Panc1 (cell line): ENCODE measurements at regions of chr2 and their contacts with region 1.

Region 1: DNA sequence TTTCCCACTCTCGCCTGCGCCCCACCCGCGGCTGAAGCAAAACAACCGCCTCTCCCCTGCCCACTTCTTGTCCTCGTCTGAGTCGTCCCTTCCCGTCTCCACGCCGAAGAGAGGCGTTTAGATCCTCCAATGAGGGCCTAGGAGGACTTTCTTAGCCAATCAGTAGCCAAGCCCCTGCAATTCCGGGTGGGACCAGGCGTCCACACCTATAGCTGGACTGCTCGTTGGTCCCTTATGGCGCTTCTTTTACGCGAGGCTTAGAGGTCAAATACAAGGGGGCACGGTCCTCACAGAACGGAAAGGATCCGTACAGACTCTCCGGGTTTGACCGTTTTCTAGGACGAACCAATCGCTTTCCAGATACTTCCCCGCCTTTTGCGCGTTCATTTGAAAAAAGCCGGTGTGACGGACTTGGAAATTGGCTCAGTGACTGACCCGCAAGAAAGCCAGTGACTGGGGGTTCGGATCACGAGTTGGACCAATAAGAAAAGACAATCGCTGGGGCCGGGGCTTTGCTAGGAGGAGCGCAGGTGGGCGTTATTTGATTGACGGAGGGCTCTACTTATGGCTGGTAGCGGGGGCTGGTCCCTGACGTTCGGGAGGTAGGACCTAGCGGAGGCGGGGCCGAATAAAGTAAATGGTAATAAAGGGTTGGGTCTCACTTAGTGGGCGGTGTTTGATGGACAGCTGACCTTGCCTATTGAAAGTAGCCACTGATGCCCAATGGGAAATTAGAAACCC is 565 bp upstream of the PPM1B start:
- DNase-seq: peak; percentile 99
- ATAC-seq: peak; percentile 92
- H3K4me3 ChIP-seq: peak overlapping the region; percentile 70 to 94
- H3K27ac ChIP-seq: peak overlapping the region; percentile 96
- H3K4me1 ChIP-seq: no peaks in the 10 kb centered on the region
- H3K27me3 ChIP-seq: no peaks in the 10 kb centered on the region
- CTCF ChIP-seq: no peak

Region 2: DNA sequence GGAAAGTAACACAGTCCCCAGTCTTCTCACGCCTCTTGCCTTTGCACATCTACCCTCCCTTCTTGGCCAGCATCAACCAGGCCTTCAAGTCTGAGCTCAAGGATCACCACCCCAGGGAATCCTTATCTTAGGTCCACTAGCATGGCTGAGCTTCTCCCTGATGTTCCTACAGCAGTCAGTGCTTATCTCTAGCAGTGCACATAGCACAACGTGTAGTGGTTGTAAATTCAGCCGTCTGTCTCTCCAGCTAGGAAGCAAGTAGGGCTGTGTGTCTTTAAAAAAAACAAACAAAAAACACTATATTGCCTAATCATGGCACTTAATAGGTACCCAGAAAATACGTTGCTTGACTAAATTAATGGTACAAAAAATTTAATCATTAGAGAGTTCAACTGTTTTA is 1703.5 kb before region 1 on chr2:
- CTCF ChIA-PET with region 1: no interaction called
- POLR2A ChIA-PET with region 1: interaction called, 14 read pairs
- in situ Hi-C with region 1: no loop called
- intact Hi-C with region 1: no loop called
- DNase-seq: no peak
- ATAC-seq: no peak
- H3K4me3 ChIP-seq: no peak overlapping the region
- H3K27ac ChIP-seq: no peak overlapping the region
- H3K4me1 ChIP-seq: no peaks in the 10 kb centered on the region
- H3K27me3 ChIP-seq: no peaks in the 10 kb centered on the region
- CTCF ChIP-seq: no peak

Region 3: DNA sequence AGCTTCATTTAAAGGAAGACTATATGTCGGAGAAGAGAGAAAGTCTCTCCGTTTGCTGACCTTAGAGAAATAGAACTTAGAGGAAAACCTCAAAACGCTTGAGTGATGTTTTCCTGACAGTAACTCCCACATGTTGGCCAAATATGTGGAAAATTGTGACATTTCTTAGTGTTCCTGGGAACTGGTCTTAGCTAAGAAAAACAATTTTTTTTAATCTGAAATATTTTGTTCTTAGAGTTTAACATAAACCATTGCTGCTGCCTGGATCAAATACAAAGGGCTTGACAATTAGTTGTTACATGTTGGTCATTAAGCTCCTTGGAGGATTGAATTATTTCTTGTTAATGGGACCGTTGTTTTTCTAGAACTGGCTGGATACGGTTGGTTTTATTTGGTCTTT is 378.0 kb before region 1 on chr2:
- CTCF ChIA-PET with region 1: no interaction called
- POLR2A ChIA-PET with region 1: no interaction called
- in situ Hi-C with region 1: no loop called
- intact Hi-C with region 1: no loop called
- DNase-seq: no peak
- ATAC-seq: no peak
- H3K4me3 ChIP-seq: no peak overlapping the region
- H3K27ac ChIP-seq: no peak overlapping the region
- H3K4me1 ChIP-seq: no peaks in the 10 kb centered on the region
- H3K27me3 ChIP-seq: no peaks in the 10 kb centered on the region
- CTCF ChIP-seq: no peak

Region 4: GRCh38 chr2:44087036-44087713 is 80.9 kb before region 1 on chr2:
- CTCF ChIA-PET with region 1: no interaction called
- POLR2A ChIA-PET with region 1: no interaction called
- in situ Hi-C with region 1: no loop called
- intact Hi-C with region 1: loop called (anchors 10 kb)
- DNase-seq: peak; percentile 56
- ATAC-seq: peak; percentile 96
- H3K4me3 ChIP-seq: peak overlapping the region; percentile 50 to 79
- H3K27ac ChIP-seq: peak overlapping the region; percentile 69
- H3K4me1 ChIP-seq: peaks cover 8% of the 10 kb centered on the region
- H3K27me3 ChIP-seq: no peaks in the 10 kb centered on the region
- CTCF ChIP-seq: peak; percentile 97

Region 5: DNA sequence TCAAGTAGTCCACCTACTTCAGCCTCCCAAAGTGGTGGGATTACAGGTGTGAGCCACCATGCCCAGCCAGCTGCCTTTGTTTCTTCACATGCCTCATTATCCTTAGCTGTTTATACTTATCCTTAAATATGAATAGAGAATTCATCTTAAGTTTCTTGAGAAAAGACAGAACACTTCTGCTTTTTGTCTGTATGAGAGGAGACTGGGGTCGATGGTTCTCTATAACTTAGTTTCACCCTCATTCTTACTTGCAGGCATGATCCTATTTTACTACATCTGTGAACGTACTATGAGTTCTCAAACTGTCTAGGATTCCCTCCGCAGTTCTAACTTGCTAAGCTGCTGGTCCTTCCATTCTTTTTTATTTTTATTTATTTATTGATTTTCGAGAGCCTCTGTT is 21.0 kb after region 1 on chr2:
- CTCF ChIA-PET with region 1: no interaction called
- POLR2A ChIA-PET with region 1: no interaction called
- in situ Hi-C with region 1: no loop called
- intact Hi-C with region 1: no loop called
- DNase-seq: no peak
- ATAC-seq: no peak
- H3K4me3 ChIP-seq: no peak overlapping the region
- H3K27ac ChIP-seq: no peak overlapping the region
- H3K4me1 ChIP-seq: no peaks in the 10 kb centered on the region
- H3K27me3 ChIP-seq: no peaks in the 10 kb centered on the region
- CTCF ChIP-seq: no peak

Region 6: DNA sequence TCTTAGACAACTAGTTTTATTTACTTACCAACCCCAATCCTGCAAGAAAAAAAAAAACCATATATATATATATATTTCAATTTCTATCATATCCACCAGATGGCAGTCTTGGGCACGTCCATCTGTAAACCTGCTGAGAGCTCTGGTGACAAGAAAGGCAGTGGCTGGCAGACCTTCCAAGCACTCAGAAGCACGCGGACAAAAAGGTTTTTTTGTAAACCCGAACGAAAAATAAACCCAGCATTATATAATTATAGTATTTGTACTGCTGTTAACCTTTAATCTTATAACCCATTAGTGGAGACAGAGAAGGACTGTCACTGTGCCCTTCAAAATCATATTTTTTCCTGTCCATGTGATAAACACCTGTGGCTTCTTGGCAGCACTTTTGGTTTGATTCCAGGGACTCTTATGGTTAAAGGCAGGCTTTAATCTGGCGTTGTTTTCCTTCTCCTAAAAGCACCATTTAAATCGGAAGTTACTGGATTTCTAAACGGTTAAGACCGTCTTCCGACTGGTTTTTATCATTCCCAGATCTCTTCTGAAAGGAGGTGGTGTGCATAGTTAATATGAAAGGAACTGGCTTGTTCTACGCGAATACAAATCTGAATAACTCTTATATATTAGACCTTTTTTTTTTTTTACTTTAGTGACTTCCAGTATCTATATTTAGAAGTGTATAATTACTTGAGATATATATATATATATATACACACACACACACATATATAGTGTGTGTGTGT is 76.2 kb after region 1 on chr2:
- CTCF ChIA-PET with region 1: interaction called, 11 read pairs
- POLR2A ChIA-PET with region 1: no interaction called
- in situ Hi-C with region 1: no loop called
- intact Hi-C with region 1: no loop called
- DNase-seq: peak; percentile 61
- ATAC-seq: peak; percentile 77
- H3K4me3 ChIP-seq: peak overlapping the region; percentile 21 to 38
- H3K27ac ChIP-seq: peak overlapping the region; percentile 81
- H3K4me1 ChIP-seq: peaks cover 23% of the 10 kb centered on the region
- H3K27me3 ChIP-seq: no peaks in the 10 kb centered on the region
- CTCF ChIP-seq: peak; percentile 80